T-cell (primary cell): ENCODE measurements at regions of chr3 and their contacts with region 1.

Region 1: GRCh38 chr3:13495921-13496723 is 16.0 kb downstream of the HDAC11 start:
- DNase-seq: peak; percentile 33 to 80 (median 61)
- ATAC-seq: peak; percentile 80 to 98 (median 89)
- H3K4me3 ChIP-seq: no peak overlapping the region
- H3K4me3 Mint-ChIP-seq: no peak overlapping the region
- H3K27ac ChIP-seq: no peak overlapping the region
- H3K27ac Mint-ChIP-seq: no peak overlapping the region
- H3K4me1 ChIP-seq: peaks cover 0 to 24% of the 10 kb centered on the region in 2 experiments
- H3K4me1 Mint-ChIP-seq: peaks cover 0 to 3% (median 0%) of the 10 kb centered on the region in 3 donors
- H3K27me3 ChIP-seq: no peaks in the 10 kb centered on the region
- H3K27me3 Mint-ChIP-seq: no peaks in the 10 kb centered on the region

Region 2: GRCh38 chr3:13648060-13649001 is 152.2 kb after region 1 on chr3:
- CTCF ChIA-PET with region 1: interaction called, 10 to 55 read pairs
- POLR2A ChIA-PET with region 1: interaction called in 1 of 2 experiments, 3 read pairs
- DNase-seq: peak; percentile 41 to 87 (median 66)
- ATAC-seq: peak; percentile 46 to 57 (median 54)
- H3K4me3 ChIP-seq: peak overlapping the region in 1 of 2 donors; percentile 40
- H3K4me3 Mint-ChIP-seq: peak overlapping the region in 1 of 3 donors; percentile 34
- H3K27ac ChIP-seq: no peak overlapping the region
- H3K27ac Mint-ChIP-seq: no peak overlapping the region
- H3K4me1 ChIP-seq: peaks cover 5 to 45% of the 10 kb centered on the region in 2 experiments
- H3K4me1 Mint-ChIP-seq: peaks cover 27 to 45% (median 38%) of the 10 kb centered on the region in 3 donors
- H3K27me3 ChIP-seq: peaks cover 0 to 43% of the 10 kb centered on the region in 2 experiments
- H3K27me3 Mint-ChIP-seq: peaks cover 11 to 25% of the 10 kb centered on the region in 2 donors